CD14-positive monocyte (primary cell): ENCODE measurements at regions of chr13 and their contacts with region 1.

Region 1: DNA sequence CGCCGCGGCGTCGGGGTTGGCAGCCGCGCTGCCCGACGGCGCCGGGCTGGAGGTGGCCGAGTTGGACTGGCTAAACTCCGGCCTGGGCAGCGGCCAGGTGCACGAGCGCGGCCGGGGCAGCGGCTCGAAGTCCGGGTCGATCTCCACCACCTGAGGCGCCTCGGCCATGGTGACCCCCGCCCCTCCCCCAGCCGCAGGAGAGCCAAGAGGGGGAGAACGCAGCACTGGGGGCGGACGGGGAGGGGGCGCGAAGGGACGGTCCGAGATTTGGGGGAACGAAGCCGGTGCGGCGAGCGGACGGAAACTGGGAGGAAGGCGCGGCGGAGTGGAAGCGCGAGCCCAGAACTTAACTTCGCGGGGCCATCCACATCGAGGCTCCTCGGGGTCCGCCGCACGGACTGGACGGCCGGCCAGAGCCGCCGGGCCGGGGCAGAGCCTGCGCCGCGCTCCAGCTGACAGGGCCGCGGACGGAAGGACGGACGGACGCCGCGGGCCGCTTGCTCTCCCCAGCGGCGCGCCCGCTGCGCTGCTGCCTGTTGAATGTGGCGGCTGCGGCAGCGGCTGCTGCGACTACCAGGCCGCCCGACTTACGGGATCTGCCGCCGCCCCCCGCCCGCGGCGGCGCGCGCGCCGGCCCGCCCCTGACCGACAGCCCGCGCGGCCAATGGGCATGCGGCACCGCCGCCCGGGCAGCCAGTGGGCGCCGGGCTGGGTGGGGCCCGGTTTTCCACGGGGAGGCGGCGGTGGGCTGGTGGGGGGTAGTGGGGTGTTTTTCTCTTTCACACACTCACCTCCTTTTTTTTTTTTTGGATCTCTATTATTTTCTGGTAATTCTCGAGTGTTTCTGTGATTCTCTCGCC is at the start of gene FOXO1:
- DNase-seq: peak; percentile 74 to 79 (median 77)
- H3K4me3 ChIP-seq: peak within 1 kb of the TSS; percentile 88 to 96 (median 93)
- H3K4me3 Mint-ChIP-seq: peak within 1 kb of the TSS; percentile 96 to 97
- H3K27ac ChIP-seq: peak within 1 kb of the TSS; percentile 52 to 80
- H3K27ac Mint-ChIP-seq: peak within 1 kb of the TSS; percentile 81 to 94 (median 92)
- H3K4me1 ChIP-seq: peaks cover 17 to 34% of the 10 kb centered on the region in 2 donors
- H3K4me1 Mint-ChIP-seq: peaks cover 36% of the 10 kb centered on the region
- H3K27me3 ChIP-seq: peaks cover 11 to 23% of the 10 kb centered on the region in 2 donors
- H3K27me3 Mint-ChIP-seq: peaks cover 14 to 23% (median 19%) of the 10 kb centered on the region in 3 donors
- CTCF ChIP-seq: no peak
- polyA plus RNA-seq, gene FOXO1: 3.1 to 11.3 (median 8.0) TPM

Region 2: GRCh38 chr13:40401911-40402776 is 264.1 kb before region 1 on chr13:
- intact Hi-C with region 1: loop called (anchors 5 to 10 kb)
- DNase-seq: peak; percentile 99 to 100 (median 100)
- H3K4me3 ChIP-seq: peak overlapping the region in 2 of 3 experiments; percentile 36 to 58
- H3K4me3 Mint-ChIP-seq: peak overlapping the region; percentile 37 to 75
- H3K27ac ChIP-seq: peak overlapping the region; percentile 75 to 94
- H3K27ac Mint-ChIP-seq: peak overlapping the region; percentile 92 to 98 (median 96)
- H3K4me1 ChIP-seq: peaks cover 58 to 65% of the 10 kb centered on the region in 2 donors
- H3K4me1 Mint-ChIP-seq: peaks cover 71% of the 10 kb centered on the region
- H3K27me3 ChIP-seq: no peaks in the 10 kb centered on the region
- H3K27me3 Mint-ChIP-seq: peaks cover 0 to 3% (median 0%) of the 10 kb centered on the region in 3 donors
- CTCF ChIP-seq: no peak

Region 3: DNA sequence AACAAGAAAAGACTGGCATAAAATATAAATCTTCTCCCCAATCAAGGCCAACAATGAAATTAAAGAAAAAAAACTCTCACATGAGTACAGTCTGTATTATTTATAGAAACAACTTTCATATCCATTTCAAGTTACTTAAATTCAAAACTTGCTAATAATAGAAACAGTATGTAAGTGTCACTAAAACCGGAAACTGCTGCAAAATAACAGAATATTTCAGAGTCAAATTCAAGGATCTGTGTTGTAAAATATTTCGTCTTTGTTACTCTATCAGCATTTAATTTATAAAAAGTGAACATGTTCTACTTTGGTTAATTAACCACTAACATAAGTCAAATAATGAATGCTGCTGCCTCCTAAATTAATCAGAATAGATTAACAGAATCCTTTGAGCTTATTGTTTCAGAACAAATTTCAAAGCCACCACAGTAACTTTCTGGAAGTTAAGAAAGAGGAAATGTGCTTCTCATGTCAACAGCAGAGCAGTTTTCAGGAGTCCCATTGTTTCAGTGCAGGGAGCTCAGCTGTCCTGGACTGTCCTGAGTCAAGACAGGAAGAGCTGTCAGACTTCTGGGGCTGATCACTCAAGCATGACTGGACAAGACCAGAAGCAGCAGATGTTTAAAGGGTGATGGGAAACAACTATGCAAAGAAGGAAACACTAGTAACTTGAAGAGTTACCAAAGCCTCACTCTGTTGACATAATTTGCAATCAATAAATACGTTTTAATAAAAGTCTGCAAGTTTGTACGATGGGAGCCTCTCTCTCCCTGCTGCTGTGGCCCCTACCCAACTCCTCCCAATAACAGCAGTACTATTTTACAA is 76.8 kb before region 1 on chr13:
- intact Hi-C with region 1: loop called in 1 of 2 experiments (anchors 5 kb)
- DNase-seq: peak; percentile 80 to 88 (median 85)
- H3K4me3 ChIP-seq: peak overlapping the region in 1 of 3 experiments; percentile 53
- H3K4me3 Mint-ChIP-seq: peak overlapping the region; percentile 32 to 83
- H3K27ac ChIP-seq: peak overlapping the region; percentile 34 to 83
- H3K27ac Mint-ChIP-seq: peak overlapping the region; percentile 81 to 95 (median 89)
- H3K4me1 ChIP-seq: peaks cover 37 to 43% of the 10 kb centered on the region in 2 donors
- H3K4me1 Mint-ChIP-seq: peaks cover 55% of the 10 kb centered on the region
- H3K27me3 ChIP-seq: no peaks in the 10 kb centered on the region
- H3K27me3 Mint-ChIP-seq: no peaks in the 10 kb centered on the region
- CTCF ChIP-seq: no peak

Region 4: GRCh38 chr13:40629678-40630384 is 36.4 kb before region 1 on chr13:
- intact Hi-C with region 1: loop called in 1 of 2 experiments (anchors 5 kb)
- DNase-seq: peak; percentile 27 to 52 (median 28)
- H3K4me3 ChIP-seq: no peak overlapping the region
- H3K4me3 Mint-ChIP-seq: no peak overlapping the region
- H3K27ac ChIP-seq: peak overlapping the region; percentile 39 to 63
- H3K27ac Mint-ChIP-seq: peak overlapping the region; percentile 50 to 80 (median 70)
- H3K4me1 ChIP-seq: peaks cover 32 to 36% of the 10 kb centered on the region in 2 donors
- H3K4me1 Mint-ChIP-seq: peaks cover 36% of the 10 kb centered on the region
- H3K27me3 ChIP-seq: no peaks in the 10 kb centered on the region
- H3K27me3 Mint-ChIP-seq: peaks cover 0 to 5% (median 2%) of the 10 kb centered on the region in 3 donors
- CTCF ChIP-seq: no peak

Region 5: DNA sequence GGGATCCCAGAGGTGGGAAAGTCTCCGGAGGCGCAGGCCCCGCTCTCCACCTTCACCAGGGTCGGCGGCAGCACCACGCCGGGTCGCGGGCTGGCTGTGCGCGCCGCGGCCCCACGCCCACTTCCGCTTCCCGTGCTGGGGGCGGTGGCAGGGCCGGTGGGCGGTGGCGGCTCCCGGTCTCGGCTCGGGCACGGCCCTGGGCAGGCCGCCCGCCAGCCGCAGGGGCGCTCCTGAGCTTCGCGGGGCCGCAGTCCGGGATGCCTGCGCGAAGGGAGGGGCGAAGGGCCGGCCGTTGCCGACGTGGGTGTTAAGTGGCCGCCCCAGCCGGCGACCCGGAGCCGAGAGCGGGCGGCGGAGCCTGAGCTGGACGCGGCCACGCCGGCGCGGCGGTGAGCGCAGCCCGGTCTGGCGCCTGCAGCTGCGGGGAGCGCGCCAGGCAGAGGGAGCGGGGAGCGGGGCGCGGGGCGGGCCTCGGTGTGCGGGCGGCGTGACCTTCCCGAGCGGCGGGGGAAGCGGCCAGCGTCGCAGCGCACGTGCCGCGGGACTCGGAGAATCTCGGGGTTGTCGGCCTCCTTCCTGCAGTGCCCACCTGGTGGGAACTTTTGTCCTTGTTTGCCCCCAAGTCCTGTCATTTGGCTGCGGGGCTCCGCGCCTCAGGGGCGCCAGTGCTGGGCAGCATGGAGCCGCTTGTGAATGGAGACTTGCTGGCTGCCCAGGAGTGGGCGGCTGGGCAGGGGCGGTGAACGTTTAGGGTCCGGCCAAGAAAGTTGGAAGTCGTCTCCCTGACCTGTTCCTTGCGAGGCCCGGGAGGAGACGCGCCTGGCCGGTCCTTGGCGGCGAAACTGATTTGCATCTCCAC is 123.2 kb after region 1 on chr13 and contains the start of gene SLC25A15:
- intact Hi-C with region 1: loop called in 1 of 2 experiments (anchors 10 kb)
- DNase-seq: peak; percentile 70 to 71 (median 71)
- H3K4me3 ChIP-seq: peak within 1 kb of the TSS; percentile 47 to 80 (median 52)
- H3K4me3 Mint-ChIP-seq: peak within 1 kb of the TSS; percentile 82 to 85
- H3K27ac ChIP-seq: peak within 1 kb of the TSS; percentile 16 to 62
- H3K27ac Mint-ChIP-seq: peak within 1 kb of the TSS; percentile 21 to 79 (median 42)
- H3K4me1 ChIP-seq: peaks cover 17 to 20% of the 10 kb centered on the region in 2 donors
- H3K4me1 Mint-ChIP-seq: peaks cover 24% of the 10 kb centered on the region
- H3K27me3 ChIP-seq: no peaks in the 10 kb centered on the region
- H3K27me3 Mint-ChIP-seq: peaks cover 0 to 6% (median 0%) of the 10 kb centered on the region in 3 donors
- CTCF ChIP-seq: peak; percentile 29
- polyA plus RNA-seq, gene SLC25A15: 0.79 to 5.0 (median 1.0) TPM